ENCODE measurements at regions of chr4 and their contacts with region 1.

Region 1: GRCh38 chr4:153127760-153128494 is 76.3 kb upstream of the TRIM2 start:
- DNase-seq: peak; percentile 46 to 73
- ATAC-seq: peak; percentile 86 to 95
- H3K4me3 ChIP-seq: no peak overlapping the region
- H3K27ac ChIP-seq: peak overlapping the region; percentile 45 to 73
- H3K4me1 ChIP-seq: 0 out of 3 replicates have a peak, but pooled peaks cover 3% of the 10 kb centered on the region
- CTCF ChIP-seq: peak; percentile 80
- EP300 ChIP-seq: no peak
- POLR2A ChIP-seq: no peak
- RAD21 ChIP-seq: peak; percentile 88 to 90

Region 2: GRCh38 chr4:152843481-152844090 is 284.3 kb before region 1 on chr4:
- CTCF ChIA-PET with region 1: interaction called, 34 read pairs
- POLR2A ChIA-PET with region 1: no interaction called
- DNase-seq: no peak
- ATAC-seq: no peak
- H3K4me3 ChIP-seq: no peak overlapping the region
- H3K27ac ChIP-seq: peak overlapping the region in 1 of 2 experiments; percentile 47; a peak in 2 of 6 replicates
- H3K4me1 ChIP-seq: peaks cover 7% of the 10 kb centered on the region
- CTCF ChIP-seq: no peak
- EP300 ChIP-seq: no peak
- POLR2A ChIP-seq: no peak
- RAD21 ChIP-seq: no peak

Region 3: DNA sequence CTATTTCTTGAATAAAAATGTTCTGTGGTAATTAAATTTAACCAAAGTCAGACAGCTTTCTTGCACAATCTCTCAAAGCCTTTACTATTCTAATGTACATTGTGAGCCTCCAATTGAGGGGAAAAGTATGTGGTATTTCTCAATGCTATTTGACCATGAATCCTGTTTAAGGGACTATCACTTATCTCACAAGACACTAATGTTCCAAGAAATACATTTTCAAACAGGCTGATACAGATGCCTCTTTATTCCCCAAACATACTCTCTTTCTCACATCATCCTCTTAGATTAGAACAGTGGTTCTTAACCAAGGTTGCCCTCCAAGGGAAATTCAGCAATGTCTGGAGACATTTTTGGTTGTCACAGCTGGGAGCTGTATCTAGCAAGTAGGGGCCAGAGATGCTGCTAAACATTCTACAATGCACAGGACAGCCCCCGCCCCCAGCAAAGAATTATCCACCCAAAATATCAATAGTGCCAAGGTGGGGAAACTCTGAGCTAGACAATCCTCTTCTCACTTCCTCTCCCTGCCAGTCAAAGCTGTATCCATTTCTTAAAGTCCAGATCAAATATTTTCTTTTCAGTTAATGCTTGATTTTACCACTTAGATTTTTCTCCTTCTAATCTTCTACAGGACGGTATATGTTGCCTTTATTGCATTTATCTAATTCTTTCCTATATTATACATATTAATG is 52.8 kb before region 1 on chr4:
- CTCF ChIA-PET with region 1: interaction called, 155 read pairs
- POLR2A ChIA-PET with region 1: no interaction called
- DNase-seq: no peak
- ATAC-seq: no peak
- H3K4me3 ChIP-seq: no peak overlapping the region
- H3K27ac ChIP-seq: no peak overlapping the region
- H3K4me1 ChIP-seq: no peaks in the 10 kb centered on the region
- CTCF ChIP-seq: no peak
- EP300 ChIP-seq: no peak
- POLR2A ChIP-seq: no peak
- RAD21 ChIP-seq: no peak

Region 4: DNA sequence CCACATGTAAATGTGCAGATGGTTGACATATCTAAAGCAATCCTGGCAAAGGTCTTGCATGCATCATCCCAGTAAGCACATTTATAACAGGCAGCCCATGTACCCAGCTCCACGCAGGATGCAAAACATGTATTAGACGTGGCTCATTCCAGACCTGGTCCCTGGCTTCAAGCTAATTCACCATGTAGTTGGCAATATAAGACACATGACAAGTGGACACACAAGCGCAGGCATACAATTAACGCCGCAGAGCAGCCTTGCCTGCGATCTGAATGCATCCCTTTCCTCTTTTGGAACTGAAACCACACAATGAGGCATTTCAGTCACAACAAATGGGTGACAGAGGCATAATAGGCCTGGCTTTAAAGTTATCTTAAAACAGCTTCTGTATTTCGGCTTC is 38.2 kb before region 1 on chr4:
- CTCF ChIA-PET with region 1: interaction called, 44 read pairs
- POLR2A ChIA-PET with region 1: no interaction called
- DNase-seq: no peak
- ATAC-seq: no peak
- H3K4me3 ChIP-seq: no peak overlapping the region
- H3K27ac ChIP-seq: no peak overlapping the region
- H3K4me1 ChIP-seq: no peaks in the 10 kb centered on the region
- CTCF ChIP-seq: no peak
- EP300 ChIP-seq: no peak
- POLR2A ChIP-seq: no peak
- RAD21 ChIP-seq: no peak

Region 5: DNA sequence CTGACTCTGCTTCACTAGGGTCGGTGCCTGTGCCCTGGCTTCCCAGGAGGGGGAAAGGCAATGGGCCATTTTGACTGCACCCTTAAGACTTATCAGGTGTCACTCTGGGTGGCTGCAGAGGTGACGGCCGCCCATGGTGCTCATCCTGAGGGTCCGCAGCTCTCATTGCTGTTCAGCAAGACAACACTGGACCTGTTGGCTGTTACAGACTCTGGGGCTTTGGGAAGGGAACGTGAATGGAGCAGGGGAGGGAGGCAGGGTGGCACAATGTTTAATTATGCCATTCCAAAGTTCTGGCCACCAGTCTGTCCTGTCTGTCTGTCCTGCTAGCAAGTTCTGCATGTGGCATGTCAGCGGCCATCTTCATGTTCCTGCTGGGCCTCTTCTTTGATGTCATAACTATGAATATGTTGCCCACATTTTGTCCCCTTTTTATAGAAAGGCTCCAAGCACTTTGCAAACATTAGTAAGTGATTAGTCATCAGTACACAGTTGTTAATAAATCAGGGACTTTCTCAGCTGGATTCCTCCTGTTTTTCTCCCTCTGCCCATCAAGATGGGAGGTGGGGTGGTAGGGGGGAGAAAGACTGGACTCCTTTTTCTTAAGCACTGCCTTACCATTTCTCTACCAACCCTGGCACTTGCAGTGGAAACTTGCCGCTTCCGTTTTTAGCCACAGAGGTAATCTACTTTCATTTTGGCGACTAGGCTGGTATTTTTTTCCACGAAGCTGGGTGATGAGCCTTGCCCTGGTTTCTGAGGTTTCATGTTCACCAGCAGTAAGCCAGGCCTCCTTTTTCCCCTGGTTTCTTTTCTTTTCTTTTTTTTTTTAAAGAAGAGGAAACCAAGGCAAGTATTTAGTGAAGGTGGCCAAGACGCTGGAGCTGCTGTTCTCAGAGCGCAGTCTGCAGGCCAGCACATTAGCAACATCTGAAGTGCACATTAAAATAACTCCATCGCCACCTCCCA is 12.3 kb before region 1 on chr4:
- CTCF ChIA-PET with region 1: interaction called, 24 read pairs
- POLR2A ChIA-PET with region 1: no interaction called
- DNase-seq: peak; percentile 52 to 69
- ATAC-seq: peak; percentile 77 to 81
- H3K4me3 ChIP-seq: peak overlapping the region; percentile 20; the same call in 1 of the 3 replicates
- H3K27ac ChIP-seq: peak overlapping the region; percentile 80 to 92
- H3K4me1 ChIP-seq: peaks cover 34% of the 10 kb centered on the region
- CTCF ChIP-seq: no peak
- EP300 ChIP-seq: no peak
- POLR2A ChIP-seq: no peak
- RAD21 ChIP-seq: no peak